ENCODE measurements at regions of chr5 and their contacts with region 1.

Region 1: GRCh38 chr5:142145106-142145900 is 36.7 kb downstream of the NDFIP1 start:
- DNase-seq: peak in 4 of 5 donors; percentile 54 to 85 (median 72)
- H3K4me3 ChIP-seq: no peak overlapping the region
- H3K27ac ChIP-seq: no peak overlapping the region
- H3K4me1 ChIP-seq: no peaks in the 10 kb centered on the region
- H3K27me3 ChIP-seq: no peaks in the 10 kb centered on the region
- CTCF ChIP-seq: peak; percentile 66

Region 2: GRCh38 chr5:141992349-141992963 is 152.8 kb before region 1 on chr5:
- intact Hi-C with region 1: loop called (anchors 10 kb)
- DNase-seq: peak in 4 of 5 donors; percentile 64 to 86 (median 76)
- H3K4me3 ChIP-seq: no peak overlapping the region
- H3K27ac ChIP-seq: no peak overlapping the region
- H3K4me1 ChIP-seq: peaks cover 0 to 5% (median 0%) of the 10 kb centered on the region in 3 donors
- H3K27me3 ChIP-seq: no peaks in the 10 kb centered on the region
- CTCF ChIP-seq: peak; percentile 75

Region 3: GRCh38 chr5:142296914-142297417 is 151.7 kb after region 1 on chr5:
- intact Hi-C with region 1: no loop called
- DNase-seq: peak in 4 of 5 donors; percentile 66 to 93 (median 72)
- H3K4me3 ChIP-seq: no peak overlapping the region
- H3K27ac ChIP-seq: peak overlapping the region in 1 of 2 donors; percentile 71
- H3K4me1 ChIP-seq: peaks cover 0 to 7% (median 5%) of the 10 kb centered on the region in 3 donors
- H3K27me3 ChIP-seq: no peaks in the 10 kb centered on the region
- CTCF ChIP-seq: no peak